ENCODE measurements at regions of chr6 and their contacts with region 1.

Region 1: DNA sequence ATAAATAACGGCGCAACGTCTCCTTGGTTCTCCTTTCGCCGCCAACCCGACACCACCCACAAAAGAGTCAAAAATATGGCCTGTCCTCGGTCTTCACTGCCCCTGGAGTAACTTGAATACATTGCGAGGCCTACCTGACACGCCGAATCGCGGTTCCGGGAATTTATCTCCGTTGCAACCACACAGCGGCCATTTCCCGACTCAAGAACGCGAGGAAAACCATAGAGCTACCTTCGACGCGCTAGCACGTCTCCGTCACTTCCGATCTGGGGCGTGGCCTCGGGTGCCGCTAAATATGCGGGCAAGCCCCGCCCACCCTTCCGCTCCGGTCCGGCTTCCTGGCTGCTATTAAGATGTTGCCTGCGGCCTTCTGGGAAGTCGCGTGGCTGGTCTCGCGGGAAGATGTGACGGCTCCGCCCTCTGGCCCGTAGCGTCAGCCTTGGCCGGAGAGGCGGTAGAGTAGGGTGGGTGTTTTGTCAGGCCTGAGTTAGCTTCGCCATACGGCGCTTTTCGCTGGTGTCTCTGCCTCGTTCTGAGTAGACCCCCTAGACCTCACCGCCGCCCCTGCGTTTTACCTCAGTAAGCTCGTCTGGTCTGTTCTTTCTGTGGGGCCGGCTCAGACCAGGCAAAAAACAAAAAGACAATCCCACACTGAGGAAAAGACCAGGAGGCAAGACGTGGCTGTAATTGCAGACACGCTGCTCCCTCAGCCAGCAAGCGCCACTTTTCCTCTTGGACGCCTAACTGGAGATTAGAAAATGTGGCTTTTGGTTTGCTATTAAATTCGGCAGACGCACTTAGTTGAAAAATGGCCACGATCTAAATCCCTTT is at the start of gene BCLAF1:
- DNase-seq: peak; percentile 92
- H3K4me3 ChIP-seq: peak within 1 kb of the TSS; percentile 93 to 98
- H3K27ac ChIP-seq: peak within 1 kb of the TSS; percentile 100
- H3K4me1 ChIP-seq: peaks cover 5 to 20% of the 10 kb centered on the region in 2 experiments; a peak in 3 of 4 replicates
- H3K27me3 ChIP-seq: no peaks in the 10 kb centered on the region
- CTCF ChIP-seq: no peak
- EP300 ChIP-seq: no peak
- RAD21 ChIP-seq: no peak
- polyA plus RNA-seq, gene BCLAF1: 21.9 and 30.4 TPM in 2 replicates

Region 2: GRCh38 chr6:136274062-136274461 is 15.7 kb before region 1 on chr6:
- CTCF ChIA-PET with region 1: interaction called, 6 read pairs
- POLR2A ChIA-PET with region 1: interaction called, 12 read pairs
- DNase-seq: no peak
- H3K4me3 ChIP-seq: no peak overlapping the region
- H3K27ac ChIP-seq: no peak overlapping the region
- H3K4me1 ChIP-seq: peaks cover 0 to 11% of the 10 kb centered on the region in 2 experiments; a peak in 2 of 4 replicates
- H3K27me3 ChIP-seq: no peaks in the 10 kb centered on the region
- CTCF ChIP-seq: no peak
- EP300 ChIP-seq: no peak
- RAD21 ChIP-seq: no peak